H1 (cell line): ENCODE measurements at regions of chr2 and their contacts with region 1.

Region 1: DNA sequence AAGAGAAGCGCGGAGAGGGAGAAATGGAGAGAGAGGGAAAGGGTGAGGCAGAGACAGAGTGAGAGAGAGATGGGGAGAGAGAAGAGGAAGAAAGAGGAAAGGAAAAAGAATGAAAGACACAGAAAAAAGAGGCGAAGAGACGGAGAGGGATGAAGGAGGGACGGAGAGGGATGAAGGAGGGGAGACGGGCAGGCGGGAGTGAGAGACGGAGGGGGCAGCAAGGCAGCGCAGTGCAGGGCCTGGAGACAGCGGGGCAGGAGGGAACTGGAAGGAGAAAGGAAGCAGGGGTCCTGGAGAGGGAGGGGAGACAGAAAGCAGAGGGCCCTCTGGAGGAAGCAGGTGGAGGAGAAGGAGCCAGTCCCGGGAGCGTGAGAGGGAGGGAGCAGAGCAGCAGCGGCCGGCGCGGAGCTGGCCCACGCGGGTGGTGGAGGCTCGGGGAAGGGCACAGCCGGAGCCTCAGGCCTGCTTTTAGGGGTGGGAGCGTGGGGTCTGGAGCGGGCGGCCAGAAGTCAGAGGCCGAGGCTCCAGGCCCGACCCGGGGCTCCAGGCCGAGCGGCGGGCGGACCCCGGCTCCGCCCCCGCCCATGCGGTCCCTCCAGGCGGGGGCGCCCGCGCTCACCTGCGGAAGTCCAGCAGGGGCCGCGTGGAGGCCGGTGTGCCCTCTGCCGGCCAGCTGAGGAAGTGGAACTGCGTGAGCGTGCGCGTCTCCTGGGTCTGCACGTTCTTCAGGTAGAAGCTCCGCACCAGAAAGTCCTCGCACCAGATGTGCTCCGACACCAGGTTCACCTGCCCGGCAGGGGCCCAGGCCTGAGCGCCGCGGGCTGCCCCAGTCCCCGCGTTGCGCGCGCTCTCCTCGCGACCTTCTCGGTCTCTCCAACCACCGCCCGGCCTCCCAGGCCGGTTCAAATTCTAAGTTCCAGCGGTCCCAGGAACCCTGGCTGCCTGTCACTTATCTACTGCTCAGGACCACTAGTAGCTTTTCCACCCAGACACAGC is 14.5 kb downstream of the PTPRN start:
- DNase-seq: peak; percentile 89 to 96
- H3K4me3 ChIP-seq: peak overlapping the region; percentile 60 to 79 (median 74)
- H3K27ac ChIP-seq: peak overlapping the region; percentile 41; the same call in 1 of the 2 replicates
- H3K4me1 ChIP-seq: peaks cover 0 to 8% (median 3%) of the 10 kb centered on the region in 4 experiments; a peak in 4 of 7 replicates
- H3K27me3 ChIP-seq: peaks cover 0 to 32% (median 19%) of the 10 kb centered on the region in 4 experiments; a peak in 6 of 7 replicates
- CTCF ChIP-seq: peak in 2 of 3 experiments; percentile 98 to 99; a peak in 3 of 4 replicates
- EP300 ChIP-seq: no peak
- POLR2A ChIP-seq: peak in 1 of 2 experiments; percentile 62; a peak in 2 of 3 replicates
- RAD21 ChIP-seq: peak; percentile 64 to 78

Region 2: GRCh38 chr2:218970894-218971293 is 323.8 kb before region 1 on chr2:
- CTCF ChIA-PET with region 1: no interaction called
- POLR2A ChIA-PET with region 1: no interaction called
- DNase-seq: no peak
- H3K4me3 ChIP-seq: no peak overlapping the region
- H3K27ac ChIP-seq: no peak overlapping the region
- H3K4me1 ChIP-seq: no peaks in the 10 kb centered on the region
- H3K27me3 ChIP-seq: peaks cover 0 to 30% (median 5%) of the 10 kb centered on the region in 4 experiments; a peak in 6 of 7 replicates
- CTCF ChIP-seq: no peak
- EP300 ChIP-seq: no peak
- POLR2A ChIP-seq: no peak
- RAD21 ChIP-seq: no peak

Region 3: DNA sequence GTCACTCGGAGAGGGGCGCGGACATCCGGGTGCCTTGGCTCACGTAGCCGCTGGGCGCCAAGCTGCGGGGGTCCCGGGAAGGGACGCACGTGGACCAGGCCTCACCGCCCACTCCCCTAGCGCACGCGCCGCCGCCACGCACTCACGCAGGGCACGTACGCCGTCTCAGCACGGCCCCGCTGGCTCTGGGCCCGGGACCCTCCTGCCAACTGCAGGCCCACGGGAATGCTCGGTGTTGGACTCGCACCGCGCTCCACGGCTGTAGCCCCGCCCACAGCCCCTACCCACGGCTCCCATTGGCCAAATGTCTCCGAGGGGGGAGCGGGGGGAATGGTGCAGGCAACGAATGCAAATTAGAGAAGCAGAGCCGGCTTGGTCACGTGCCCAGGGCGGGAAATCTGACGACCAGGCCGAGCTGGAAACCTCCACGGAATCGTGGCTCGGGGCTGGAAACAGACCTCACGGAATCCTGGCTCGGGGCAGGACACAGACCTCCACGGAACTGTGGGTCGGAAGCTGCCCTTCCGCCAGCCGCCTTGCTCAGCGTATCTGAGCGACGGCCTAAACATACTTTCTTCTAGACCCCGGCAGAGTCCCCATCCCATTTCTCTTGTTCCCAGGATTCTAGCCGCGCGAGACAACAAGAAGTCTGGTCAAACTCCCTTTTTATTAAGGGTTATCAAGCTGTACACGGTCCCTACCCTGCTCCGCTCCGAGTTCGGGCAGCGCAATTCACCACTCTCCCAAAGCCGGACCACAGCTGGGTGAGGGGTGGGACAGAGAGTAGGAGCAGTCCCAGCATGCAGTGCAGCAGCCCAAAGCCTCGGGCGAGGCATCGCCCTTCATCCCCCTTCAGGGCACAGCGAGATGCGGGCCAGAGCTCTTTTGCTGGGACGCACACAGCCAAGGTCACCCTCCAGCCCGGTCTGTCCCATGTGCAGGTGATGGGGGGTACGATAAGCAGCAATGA is 75.6 kb before region 1 on chr2 and contains the start of gene ABCB6:
- CTCF ChIA-PET with region 1: interaction called, 7 read pairs
- POLR2A ChIA-PET with region 1: interaction called, 12 read pairs
- DNase-seq: peak in 1 of 2 experiments; percentile 92
- H3K4me3 ChIP-seq: peak within 1 kb of the TSS; percentile 66 to 80 (median 75)
- H3K27ac ChIP-seq: peak within 1 kb of the TSS; percentile 76; the same call in 1 of the 2 replicates
- H3K4me1 ChIP-seq: peaks cover 0 to 12% (median 6%) of the 10 kb centered on the region in 4 experiments; a peak in 3 of 7 replicates
- H3K27me3 ChIP-seq: no peaks in the 10 kb centered on the region; a peak in 1 of 7 replicates
- CTCF ChIP-seq: peak in 1 of 3 experiments; percentile 2; a peak in 2 of 4 replicates
- EP300 ChIP-seq: no peak
- POLR2A ChIP-seq: peak in 1 of 2 experiments; percentile 93; a peak in 2 of 3 replicates
- RAD21 ChIP-seq: peak in 1 of 2 experiments; percentile 11; a peak in 1 of 4 replicates
- total RNA-seq, gene ABCB6: 44.9 and 49.9 TPM in 2 replicates

Region 4: DNA sequence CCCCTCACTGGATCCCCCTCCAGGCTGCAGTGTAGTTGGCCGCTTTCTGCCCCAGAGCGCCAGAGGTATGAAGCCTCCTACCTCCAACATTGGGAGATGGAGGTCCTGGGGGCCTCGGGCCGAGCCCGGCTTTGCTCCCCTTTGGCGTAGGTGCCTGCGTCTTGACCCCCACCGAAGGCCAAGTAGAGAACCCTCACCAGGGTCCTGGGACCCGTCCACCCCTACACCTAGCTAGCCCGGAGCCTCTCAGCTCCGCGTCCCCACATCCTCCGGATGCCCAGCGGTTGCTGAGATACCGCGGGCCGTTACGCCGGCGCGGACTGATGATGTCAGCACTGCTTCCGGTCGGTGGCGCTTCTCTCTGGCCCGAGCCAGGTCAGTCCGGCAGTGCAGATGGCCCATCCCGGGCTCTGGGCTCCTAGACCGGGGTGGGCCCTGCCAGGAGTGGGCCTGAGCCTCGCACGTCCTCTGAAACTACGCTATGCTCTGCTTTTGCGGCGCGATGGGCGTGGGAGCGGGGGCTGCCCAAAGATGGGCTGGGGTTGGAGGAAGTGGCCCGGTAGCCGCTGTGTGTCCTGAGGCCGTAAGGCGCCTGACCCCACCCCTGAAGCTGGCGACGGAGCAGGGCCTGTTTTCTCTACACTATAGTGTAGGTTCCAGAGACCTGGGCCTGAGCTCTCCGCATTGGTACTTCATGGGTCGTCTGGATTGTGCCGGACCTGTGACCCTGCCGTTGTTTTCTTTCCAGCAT is 49.3 kb before region 1 on chr2 and contains the starts of genes GLB1L and STK16:
- CTCF ChIA-PET with region 1: interaction called, 118 read pairs
- POLR2A ChIA-PET with region 1: interaction called, 12 read pairs
- DNase-seq: peak in 1 of 2 experiments; percentile 98
- H3K4me3 ChIP-seq: peak within 1 kb of the TSS; percentile 74 to 81 (median 80)
- H3K27ac ChIP-seq: peak within 1 kb of the TSS; percentile 91
- H3K4me1 ChIP-seq: peaks cover 0 to 5% (median 3%) of the 10 kb centered on the region in 4 experiments; a peak in 3 of 7 replicates
- H3K27me3 ChIP-seq: no peaks in the 10 kb centered on the region
- CTCF ChIP-seq: no peak
- EP300 ChIP-seq: no peak
- POLR2A ChIP-seq: peak in 1 of 2 experiments; percentile 91; a peak in 2 of 3 replicates
- RAD21 ChIP-seq: no peak
- total RNA-seq, gene GLB1L: 3.2 and 3.7 TPM in 2 replicates
- total RNA-seq, gene STK16: 17.0 and 21.3 TPM in 2 replicates

Region 5: DNA sequence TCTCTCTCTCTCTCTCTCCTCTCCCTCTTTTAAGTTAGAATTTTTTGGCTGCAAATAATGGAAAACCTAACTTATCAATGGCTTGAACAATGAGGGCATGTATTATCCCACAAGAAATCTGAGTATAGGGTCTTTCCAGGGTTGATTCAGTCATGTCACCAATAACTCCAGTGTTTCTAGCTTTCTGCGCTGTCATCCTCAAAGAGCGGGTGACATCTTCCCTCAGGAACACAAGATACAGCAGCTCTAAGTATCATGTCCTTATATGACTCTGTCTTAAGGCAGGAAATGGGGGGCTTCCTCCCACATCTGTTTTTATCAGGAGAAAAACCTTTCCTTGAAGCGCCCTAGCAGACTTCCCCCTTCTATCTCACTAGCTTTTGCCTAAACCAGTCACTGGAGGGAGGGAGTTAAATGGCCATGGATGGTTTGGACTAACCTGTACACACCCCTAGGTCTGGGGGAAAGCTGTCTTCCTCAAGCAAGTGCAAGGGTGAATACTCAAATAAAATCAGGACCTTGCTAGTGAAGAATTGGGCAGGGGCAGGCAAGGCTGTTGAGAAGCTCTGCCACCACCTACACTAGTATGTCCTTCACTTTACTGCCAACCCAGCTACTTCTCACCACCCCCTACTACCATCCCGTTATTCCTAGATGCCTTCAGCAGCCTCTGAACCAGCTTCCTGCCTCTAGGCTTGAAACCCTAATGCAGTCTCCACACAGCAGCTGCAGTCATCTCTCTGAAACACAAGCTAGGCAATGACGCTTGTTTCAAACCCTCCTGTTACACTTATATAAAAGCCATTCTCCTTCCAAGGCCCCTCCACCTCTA is 33.4 kb before region 1 on chr2:
- CTCF ChIA-PET with region 1: interaction called, 37 read pairs
- POLR2A ChIA-PET with region 1: interaction called, 3 read pairs
- DNase-seq: no peak
- H3K4me3 ChIP-seq: no peak overlapping the region
- H3K27ac ChIP-seq: no peak overlapping the region
- H3K4me1 ChIP-seq: no peaks in the 10 kb centered on the region
- H3K27me3 ChIP-seq: peaks cover 0 to 7% (median 3%) of the 10 kb centered on the region in 4 experiments; a peak in 6 of 7 replicates
- CTCF ChIP-seq: no peak
- EP300 ChIP-seq: no peak
- POLR2A ChIP-seq: no peak
- RAD21 ChIP-seq: no peak

Region 6: GRCh38 chr2:219308142-219309093 is 13.8 kb after region 1 on chr2:
- CTCF ChIA-PET with region 1: interaction called, 82 read pairs
- POLR2A ChIA-PET with region 1: interaction called, 4 read pairs
- DNase-seq: peak in 1 of 2 experiments; percentile 97
- H3K4me3 ChIP-seq: peak overlapping the region; percentile 38 to 74 (median 44)
- H3K27ac ChIP-seq: no peak overlapping the region
- H3K4me1 ChIP-seq: peaks cover 0 to 9% (median 4%) of the 10 kb centered on the region in 4 experiments; a peak in 5 of 7 replicates
- H3K27me3 ChIP-seq: peaks cover 0 to 14% (median 12%) of the 10 kb centered on the region in 4 experiments; a peak in 4 of 7 replicates
- CTCF ChIP-seq: no peak
- EP300 ChIP-seq: no peak
- POLR2A ChIP-seq: no peak
- RAD21 ChIP-seq: no peak

Region 7: DNA sequence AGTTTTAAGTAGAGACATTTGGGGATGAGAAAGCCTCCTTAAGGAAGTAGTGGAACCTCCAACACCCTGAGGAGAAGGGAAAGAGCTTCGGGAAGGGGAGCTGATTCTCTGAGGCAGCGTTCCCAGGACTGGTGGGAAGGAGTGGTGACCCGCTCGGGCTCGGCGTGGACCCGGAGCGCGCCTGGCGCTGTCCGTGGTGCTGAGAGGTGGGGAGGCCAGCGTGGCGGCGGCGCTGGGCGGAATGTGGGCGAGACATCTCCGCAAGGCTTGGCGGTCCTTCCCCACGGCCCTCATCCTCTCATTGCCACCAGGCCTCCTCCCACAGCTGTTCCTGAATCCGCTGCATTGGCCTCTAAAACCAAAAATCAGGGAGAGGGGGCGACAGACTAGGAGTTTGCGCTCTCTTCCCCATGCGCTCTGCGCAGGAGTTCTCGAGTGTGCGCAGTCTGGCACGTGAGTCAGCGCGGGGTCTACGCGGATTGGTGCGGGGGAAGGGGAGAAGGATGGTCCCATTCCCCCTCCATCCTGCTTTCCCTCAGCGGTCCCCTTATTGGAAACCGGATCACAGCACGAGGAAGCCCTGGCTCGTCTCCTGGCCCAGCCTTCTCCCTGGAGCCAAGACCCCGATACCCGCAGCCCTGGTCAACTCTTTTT is 37.0 kb after region 1 on chr2:
- CTCF ChIA-PET with region 1: interaction called, 15 read pairs
- POLR2A ChIA-PET with region 1: interaction called, 3 read pairs
- DNase-seq: peak in 1 of 2 experiments; percentile 90
- H3K4me3 ChIP-seq: peak overlapping the region in 1 of 4 experiments; percentile 33; a peak in 1 of 8 replicates
- H3K27ac ChIP-seq: no peak overlapping the region
- H3K4me1 ChIP-seq: peaks cover 0 to 3% (median 1%) of the 10 kb centered on the region in 4 experiments; a peak in 5 of 7 replicates
- H3K27me3 ChIP-seq: peaks cover 11 to 37% (median 24%) of the 10 kb centered on the region in 4 experiments
- CTCF ChIP-seq: no peak
- EP300 ChIP-seq: no peak
- POLR2A ChIP-seq: no peak
- RAD21 ChIP-seq: no peak

Region 8: GRCh38 chr2:219352448-219353023 is 57.9 kb after region 1 on chr2:
- CTCF ChIA-PET with region 1: interaction called, 50 read pairs
- POLR2A ChIA-PET with region 1: no interaction called
- DNase-seq: peak; percentile 43 to 94
- H3K4me3 ChIP-seq: no peak overlapping the region
- H3K27ac ChIP-seq: no peak overlapping the region
- H3K4me1 ChIP-seq: peaks cover 0 to 3% (median 0%) of the 10 kb centered on the region in 4 experiments; a peak in 1 of 7 replicates
- H3K27me3 ChIP-seq: peaks cover 4 to 13% (median 8%) of the 10 kb centered on the region in 4 experiments
- CTCF ChIP-seq: peak; percentile 59 to 85 (median 81)
- EP300 ChIP-seq: no peak
- POLR2A ChIP-seq: no peak
- RAD21 ChIP-seq: peak; percentile 74 to 77